ENCODE measurements at regions of chr12 and their contacts with region 1.

Region 1: GRCh38 chr12:7638760-7639555 is 26.8 kb downstream of the APOBEC1 start:
- DNase-seq: peak in 1 of 2 donors; percentile 91
- H3K4me3 ChIP-seq: no peak overlapping the region
- H3K27ac ChIP-seq: no peak overlapping the region
- H3K4me1 ChIP-seq: no peaks in the 10 kb centered on the region
- H3K27me3 ChIP-seq: no peaks in the 10 kb centered on the region
- CTCF ChIP-seq: peak; percentile 88 to 95 (median 89)
- POLR2A ChIP-seq: no peak

Region 2: DNA sequence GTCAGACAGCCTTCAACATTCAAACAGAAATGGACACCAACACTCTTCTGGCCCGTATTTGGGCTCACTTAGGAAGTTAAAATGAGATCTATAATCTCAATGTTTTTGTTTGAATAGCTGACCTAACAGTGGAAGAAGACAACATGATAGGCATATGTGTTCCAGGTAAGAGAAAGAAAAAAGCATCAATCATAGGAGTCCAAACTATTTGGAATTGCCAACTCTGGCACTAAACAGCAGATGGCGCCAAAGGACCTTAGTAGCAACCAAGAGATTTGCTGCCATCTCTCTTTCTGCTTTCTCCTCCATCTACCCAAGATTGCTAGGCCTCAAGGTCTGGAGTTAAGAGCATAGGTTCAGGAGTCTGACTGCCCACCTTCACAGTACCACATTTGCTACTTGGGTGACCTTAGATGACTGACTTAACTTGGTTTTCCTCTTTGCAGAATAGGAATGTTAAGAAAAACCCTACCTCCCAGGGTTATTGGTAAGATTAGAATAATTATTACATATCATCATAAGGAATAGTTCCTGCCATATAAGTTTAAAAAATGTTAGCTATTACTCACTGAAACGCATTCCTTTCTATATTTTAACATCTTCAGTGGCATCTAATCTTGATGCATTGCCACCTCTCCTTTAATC is 419.2 kb before region 1 on chr12:
- intact Hi-C with region 1: loop called (anchors 5 kb)
- DNase-seq: no peak
- H3K4me3 ChIP-seq: no peak overlapping the region
- H3K27ac ChIP-seq: no peak overlapping the region
- H3K4me1 ChIP-seq: no peaks in the 10 kb centered on the region
- H3K27me3 ChIP-seq: no peaks in the 10 kb centered on the region
- CTCF ChIP-seq: peak; percentile 35 to 81 (median 76)
- POLR2A ChIP-seq: no peak

Region 3: GRCh38 chr12:7695237-7696197 is 56.6 kb after region 1 on chr12 and contains the start of gene GDF3:
- intact Hi-C with region 1: no loop called
- DNase-seq: no peak
- H3K4me3 ChIP-seq: no peak within 1 kb of the TSS
- H3K27ac ChIP-seq: no peak within 1 kb of the TSS
- H3K4me1 ChIP-seq: no peaks in the 10 kb centered on the region
- H3K27me3 ChIP-seq: no peaks in the 10 kb centered on the region
- CTCF ChIP-seq: no peak
- POLR2A ChIP-seq: no peak
- total RNA-seq, gene GDF3: not detected

Measured in vagina (tissue), 2 donors.